HEK293 (cell line): ENCODE measurements at regions of chr11 and their contacts with region 1.

Region 1: GRCh38 chr11:44427432-44427831 is 117.5 kb upstream of the ALX4 start:
- H3K4me3 ChIP-seq: no peak overlapping the region
- H3K27ac ChIP-seq: no peak overlapping the region
- H3K4me1 ChIP-seq: no peaks in the 10 kb centered on the region
- CTCF ChIP-seq: no peak

Region 2: DNA sequence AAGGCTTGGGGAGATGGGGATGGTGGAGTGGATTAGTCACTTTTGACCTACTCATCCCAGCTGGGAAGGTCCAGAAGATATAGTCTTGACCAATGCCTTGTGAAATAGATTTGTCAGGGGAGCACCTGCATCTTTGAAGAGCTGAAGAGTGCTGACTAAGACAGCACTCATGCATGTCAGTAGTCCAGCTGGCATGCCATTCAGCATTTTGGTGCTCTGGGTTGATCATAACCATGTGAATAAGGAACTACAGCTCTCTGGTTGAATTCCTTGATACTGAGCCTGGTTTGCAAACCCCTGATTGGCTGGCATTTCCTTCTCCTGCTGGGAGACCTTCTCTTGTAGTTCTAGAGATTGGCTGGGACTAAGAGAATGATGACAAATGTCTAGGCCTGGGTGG is 10.7 kb before region 1 on chr11:
- CTCF ChIA-PET with region 1: interaction called, 17 read pairs
- POLR2A ChIA-PET with region 1: no interaction called
- H3K4me3 ChIP-seq: no peak overlapping the region
- H3K27ac ChIP-seq: no peak overlapping the region
- H3K4me1 ChIP-seq: no peaks in the 10 kb centered on the region
- CTCF ChIP-seq: no peak

Region 3: GRCh38 chr11:44443836-44444769 is 16.7 kb after region 1 on chr11:
- CTCF ChIA-PET with region 1: interaction called, 10 read pairs
- POLR2A ChIA-PET with region 1: no interaction called
- H3K4me3 ChIP-seq: no peak overlapping the region
- H3K27ac ChIP-seq: no peak overlapping the region
- H3K4me1 ChIP-seq: no peaks in the 10 kb centered on the region
- CTCF ChIP-seq: no peak

Region 4: GRCh38 chr11:44592125-44592940 is 164.9 kb after region 1 on chr11:
- CTCF ChIA-PET with region 1: no interaction called
- POLR2A ChIA-PET with region 1: no interaction called
- H3K4me3 ChIP-seq: no peak overlapping the region
- H3K27ac ChIP-seq: no peak overlapping the region
- H3K4me1 ChIP-seq: no peaks in the 10 kb centered on the region
- CTCF ChIP-seq: no peak